Heart left ventricle (tissue), 16 donors: ENCODE measurements at regions of chr14 and their contacts with region 1.

Region 1: DNA sequence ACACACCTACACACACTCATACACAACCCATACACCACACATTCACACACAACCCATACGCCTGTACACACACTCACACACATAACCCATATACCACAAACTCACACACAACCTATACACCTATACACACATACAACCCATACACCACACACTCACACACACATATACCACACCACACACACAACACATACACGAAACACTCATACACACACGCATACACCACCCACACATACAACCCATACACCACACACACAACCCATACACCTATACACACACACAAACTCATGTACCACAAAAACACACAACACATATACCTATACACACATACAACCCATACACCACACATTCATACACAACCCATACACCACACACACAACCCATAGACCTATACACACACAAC is 164.3 kb downstream of the TMEM121 start:
- DNase-seq: no peak
- ATAC-seq: no peak
- H3K4me3 ChIP-seq: no peak overlapping the region
- H3K27ac ChIP-seq: no peak overlapping the region
- H3K4me1 ChIP-seq: no peaks in the 10 kb centered on the region
- H3K27me3 ChIP-seq: peaks cover 0 to 16% (median 0%) of the 10 kb centered on the region in 9 donors
- CTCF ChIP-seq: no peak
- POLR2A ChIP-seq: no peak

Region 2: DNA sequence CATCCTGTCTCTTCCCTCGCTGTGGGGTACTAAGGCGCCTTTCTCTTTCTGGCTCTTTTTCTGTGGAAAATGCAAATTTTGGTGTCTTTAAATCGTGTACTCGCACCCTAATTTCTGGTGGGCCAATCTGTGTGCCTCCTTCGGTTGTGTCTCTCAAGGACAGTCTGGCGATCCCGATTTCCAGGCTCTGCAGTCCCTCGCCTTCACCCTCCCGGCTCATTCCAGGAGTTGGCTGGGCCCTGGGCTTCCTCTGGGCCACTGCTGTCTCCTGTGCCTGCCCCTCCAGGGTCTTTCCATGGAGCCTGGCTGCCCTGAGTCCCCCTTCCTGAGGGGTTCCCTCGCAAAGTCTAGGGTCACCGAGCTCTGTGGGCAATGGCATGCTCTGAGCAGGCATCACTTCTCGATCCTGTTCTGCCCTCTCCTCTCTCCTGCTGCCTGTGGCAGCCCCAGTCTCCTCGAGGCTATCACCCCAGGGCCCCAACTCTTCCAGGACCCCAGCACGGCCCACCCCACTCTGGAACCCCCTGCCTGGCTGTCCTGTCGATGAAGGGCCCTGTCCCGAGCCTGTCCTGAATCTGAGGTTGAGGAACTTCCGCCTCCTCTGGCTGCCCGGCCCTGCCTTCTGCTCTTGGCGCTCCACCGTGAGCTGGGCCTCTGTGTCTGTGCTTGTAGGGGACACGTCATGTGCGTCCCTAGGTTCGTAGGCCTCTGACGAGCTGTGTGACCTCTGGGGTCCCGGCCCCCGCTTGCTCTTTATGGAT is 736.6 kb before region 1 on chr14:
- intact Hi-C with region 1: no loop called
- DNase-seq: peak in 2 of 5 donors; percentile 21 to 54
- ATAC-seq: no peak
- H3K4me3 ChIP-seq: no peak overlapping the region
- H3K27ac ChIP-seq: no peak overlapping the region
- H3K4me1 ChIP-seq: no peaks in the 10 kb centered on the region
- H3K27me3 ChIP-seq: peaks cover 0 to 17% (median 0%) of the 10 kb centered on the region in 9 donors
- CTCF ChIP-seq: no peak
- POLR2A ChIP-seq: no peak

Region 3: DNA sequence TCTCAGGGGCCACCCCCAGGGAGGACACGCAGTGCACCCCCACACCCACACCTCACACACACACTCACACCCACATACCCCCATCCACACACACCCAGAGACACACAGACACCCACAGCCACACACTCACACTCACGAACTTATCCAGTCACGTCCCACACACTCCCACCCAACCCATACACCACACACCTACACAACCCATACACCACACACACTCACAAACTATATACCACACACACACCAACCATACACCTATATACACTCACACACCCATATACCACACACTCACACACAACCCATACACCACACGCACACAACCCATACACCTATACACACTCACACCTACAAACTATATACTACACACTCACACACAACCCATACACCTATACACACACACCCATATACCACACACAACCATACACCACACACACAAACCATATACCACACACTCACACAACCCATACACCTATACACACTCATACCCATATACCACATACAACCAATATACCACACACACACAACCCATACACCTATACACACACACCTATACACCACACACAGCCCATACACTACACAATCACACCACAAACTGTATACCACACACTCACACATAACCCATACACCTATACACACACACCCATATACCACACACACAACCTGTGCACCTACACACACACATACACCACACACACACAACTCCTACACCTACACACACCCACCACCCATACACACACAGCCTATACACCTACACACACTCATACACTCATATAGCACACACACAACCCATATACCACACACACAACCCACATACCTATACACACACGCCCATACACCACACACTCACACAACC is 121.6 kb before region 1 on chr14:
- intact Hi-C with region 1: loop called in 7 of 10 experiments (anchors 5 to 10 kb)
- DNase-seq: no peak
- ATAC-seq: no peak
- H3K4me3 ChIP-seq: no peak overlapping the region
- H3K27ac ChIP-seq: no peak overlapping the region
- H3K4me1 ChIP-seq: no peaks in the 10 kb centered on the region
- H3K27me3 ChIP-seq: no peaks in the 10 kb centered on the region
- CTCF ChIP-seq: no peak
- POLR2A ChIP-seq: no peak

Region 4: DNA sequence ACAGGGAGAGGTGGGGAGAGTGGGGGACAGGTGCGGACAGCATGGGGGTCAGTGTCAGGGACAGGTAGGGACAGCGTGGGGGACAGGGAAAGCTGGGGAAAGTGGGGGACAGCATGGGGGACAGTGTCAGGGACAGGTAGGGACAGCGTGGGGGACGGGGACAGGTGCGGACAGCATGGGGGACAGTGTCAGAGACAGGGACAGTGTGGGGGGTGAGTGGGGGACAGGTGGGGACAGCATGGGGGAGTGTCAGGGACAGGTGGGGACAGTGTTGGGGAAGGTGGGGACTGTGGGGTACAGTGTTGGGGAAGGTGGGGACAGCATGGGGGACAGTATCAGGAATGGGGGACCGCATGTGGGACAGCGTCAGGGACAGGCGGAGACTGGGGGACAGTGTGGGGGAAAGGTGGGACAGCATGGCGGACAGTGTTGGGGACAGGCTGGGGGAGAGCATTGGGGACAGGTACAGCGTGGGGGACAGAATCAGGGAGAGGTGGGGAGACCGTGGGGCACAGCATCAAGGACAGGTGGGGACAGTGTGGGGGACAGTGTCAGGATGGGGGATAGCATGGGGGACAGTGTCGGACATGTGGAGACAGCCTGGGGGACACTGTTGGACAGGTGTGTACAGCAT is 68.3 kb before region 1 on chr14:
- intact Hi-C with region 1: no loop called
- DNase-seq: peak in 2 of 5 donors; percentile 2 to 52
- ATAC-seq: peak in 2 of 4 donors; percentile 29 to 68
- H3K4me3 ChIP-seq: no peak overlapping the region
- H3K27ac ChIP-seq: no peak overlapping the region
- H3K4me1 ChIP-seq: no peaks in the 10 kb centered on the region
- H3K27me3 ChIP-seq: peaks cover 0 to 5% (median 0%) of the 10 kb centered on the region in 9 donors
- CTCF ChIP-seq: no peak
- POLR2A ChIP-seq: no peak

Region 5: GRCh38 chr14:105931808-105932483 is 241.3 kb after region 1 on chr14:
- intact Hi-C with region 1: loop called in 1 of 10 experiments (anchors 10 kb)
- DNase-seq: peak in 2 of 5 donors; percentile 5 to 10
- ATAC-seq: no peak
- H3K4me3 ChIP-seq: no peak overlapping the region
- H3K27ac ChIP-seq: no peak overlapping the region
- H3K4me1 ChIP-seq: no peaks in the 10 kb centered on the region
- H3K27me3 ChIP-seq: peaks cover 0 to 23% (median 0%) of the 10 kb centered on the region in 9 donors
- CTCF ChIP-seq: no peak
- POLR2A ChIP-seq: no peak